GM12878 (cell line): ENCODE measurements at regions of chr1 and their contacts with region 1.

Region 1: DNA sequence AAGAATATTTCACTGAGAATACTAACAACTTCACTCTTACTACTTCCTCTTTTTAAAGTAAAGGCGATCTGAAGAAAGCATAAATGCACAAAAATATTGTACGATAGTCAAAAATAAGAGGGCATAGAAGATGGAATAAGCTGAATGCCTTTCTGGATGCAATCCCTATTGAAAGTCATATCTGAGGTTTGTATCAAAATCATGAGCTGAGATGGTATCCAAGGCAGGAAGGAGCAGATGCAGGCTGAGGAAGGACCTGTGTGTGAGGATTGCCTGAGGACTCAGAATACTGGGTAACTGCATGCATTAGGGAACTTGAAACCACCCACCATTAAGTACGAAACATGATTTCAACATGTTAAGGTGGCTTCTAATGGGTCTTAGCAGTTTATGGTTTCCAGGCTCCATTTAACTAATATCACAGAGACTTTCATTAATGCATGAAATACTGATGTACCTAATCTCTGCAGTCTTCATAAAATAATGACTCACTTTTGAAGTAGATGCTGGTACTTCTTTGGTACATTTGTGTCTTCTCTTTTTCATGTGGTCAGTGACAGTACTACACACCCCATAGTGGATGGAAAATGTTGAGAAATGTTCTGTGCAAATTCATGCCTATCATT is 29.6 kb upstream of the RGS1 start:
- DNase-seq: peak; percentile 87
- ATAC-seq: peak; percentile 67
- H3K4me3 ChIP-seq: no peak overlapping the region; the same call in 1 of the 2 replicates
- H3K27ac ChIP-seq: peak overlapping the region; percentile 84
- H3K4me1 ChIP-seq: peaks cover 53% of the 10 kb centered on the region
- H3K27me3 ChIP-seq: no peaks in the 10 kb centered on the region
- CTCF ChIP-seq: peak in 2 of 3 experiments; percentile 37 to 41; a peak in 2 of 6 replicates
- EP300 ChIP-seq: peak in 1 of 2 experiments; percentile 39; a peak in 1 of 4 replicates
- POLR2A ChIP-seq: 0 out of 2 replicates have a peak, but pooled peaks have one; percentile 34
- RAD21 ChIP-seq: peak; percentile 29; the same call in 1 of the 2 replicates

Region 2: GRCh38 chr1:192516776-192517297 is 29.2 kb before region 1 on chr1:
- CTCF ChIA-PET with region 1: interaction called, 78 read pairs
- POLR2A ChIA-PET with region 1: interaction called, 170 read pairs
- RAD21 ChIA-PET with region 1: interaction called, 288 read pairs
- SMC1A ChIA-PET with region 1: interaction called, 268 read pairs
- in situ Hi-C with region 1: no loop called
- intact Hi-C with region 1: loop called (anchors 1 kb)
- DNase-seq: peak; percentile 99
- ATAC-seq: peak; percentile 87
- H3K4me3 ChIP-seq: 0 out of 2 replicates have a peak overlapping the region, but pooled peaks have one; percentile 34
- H3K27ac ChIP-seq: peak overlapping the region; percentile 72
- H3K4me1 ChIP-seq: peaks cover 22% of the 10 kb centered on the region; the same call in 1 of the 2 replicates
- H3K27me3 ChIP-seq: no peaks in the 10 kb centered on the region
- CTCF ChIP-seq: no peak
- EP300 ChIP-seq: peak; percentile 99
- POLR2A ChIP-seq: no peak
- RAD21 ChIP-seq: peak; percentile 14; the same call in 1 of the 2 replicates

Region 3: GRCh38 chr1:192524223-192524622 is 21.8 kb before region 1 on chr1:
- CTCF ChIA-PET with region 1: interaction called, 78 read pairs
- POLR2A ChIA-PET with region 1: interaction called, 170 read pairs
- RAD21 ChIA-PET with region 1: interaction called, 288 read pairs
- SMC1A ChIA-PET with region 1: interaction called, 268 read pairs
- in situ Hi-C with region 1: no loop called
- intact Hi-C with region 1: no loop called
- DNase-seq: no peak
- ATAC-seq: no peak
- H3K4me3 ChIP-seq: no peak overlapping the region
- H3K27ac ChIP-seq: no peak overlapping the region
- H3K4me1 ChIP-seq: peaks cover 9% of the 10 kb centered on the region; the same call in 1 of the 2 replicates
- H3K27me3 ChIP-seq: no peaks in the 10 kb centered on the region
- CTCF ChIP-seq: no peak
- EP300 ChIP-seq: no peak
- POLR2A ChIP-seq: no peak
- RAD21 ChIP-seq: no peak

Region 4: DNA sequence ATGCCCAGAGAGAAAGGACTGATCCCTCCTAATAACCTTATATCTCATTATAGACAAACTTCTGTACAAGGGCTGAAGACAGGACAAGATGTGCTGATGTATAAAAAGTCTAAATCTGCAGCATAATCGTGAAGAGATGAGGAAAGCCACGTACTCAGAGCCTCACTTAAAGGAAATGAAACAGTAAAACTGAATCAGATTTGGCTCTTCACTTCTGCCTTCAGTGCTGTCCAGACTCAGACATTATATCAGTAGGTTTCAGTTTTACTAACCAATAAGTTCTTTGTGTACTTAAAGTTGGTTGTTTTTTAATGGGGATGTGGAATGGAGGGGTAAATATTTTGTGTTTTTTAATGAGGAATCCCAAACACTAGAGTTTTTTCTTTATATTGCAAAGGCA is 15.8 kb before region 1 on chr1:
- CTCF ChIA-PET with region 1: interaction called, 35 read pairs
- POLR2A ChIA-PET with region 1: interaction called, 7 read pairs
- RAD21 ChIA-PET with region 1: interaction called, 36 read pairs
- SMC1A ChIA-PET with region 1: interaction called, 77 read pairs
- in situ Hi-C with region 1: no loop called
- intact Hi-C with region 1: no loop called
- DNase-seq: peak; percentile 93
- ATAC-seq: peak; percentile 95
- H3K4me3 ChIP-seq: no peak overlapping the region
- H3K27ac ChIP-seq: peak overlapping the region; percentile 51; the same call in 1 of the 2 replicates
- H3K4me1 ChIP-seq: peaks cover 16% of the 10 kb centered on the region
- H3K27me3 ChIP-seq: no peaks in the 10 kb centered on the region; a peak in 1 of 4 replicates
- CTCF ChIP-seq: no peak
- EP300 ChIP-seq: peak; percentile 81 to 92; a peak in 3 of 4 replicates
- POLR2A ChIP-seq: no peak
- RAD21 ChIP-seq: no peak; the same call in 1 of the 2 replicates

Region 5: DNA sequence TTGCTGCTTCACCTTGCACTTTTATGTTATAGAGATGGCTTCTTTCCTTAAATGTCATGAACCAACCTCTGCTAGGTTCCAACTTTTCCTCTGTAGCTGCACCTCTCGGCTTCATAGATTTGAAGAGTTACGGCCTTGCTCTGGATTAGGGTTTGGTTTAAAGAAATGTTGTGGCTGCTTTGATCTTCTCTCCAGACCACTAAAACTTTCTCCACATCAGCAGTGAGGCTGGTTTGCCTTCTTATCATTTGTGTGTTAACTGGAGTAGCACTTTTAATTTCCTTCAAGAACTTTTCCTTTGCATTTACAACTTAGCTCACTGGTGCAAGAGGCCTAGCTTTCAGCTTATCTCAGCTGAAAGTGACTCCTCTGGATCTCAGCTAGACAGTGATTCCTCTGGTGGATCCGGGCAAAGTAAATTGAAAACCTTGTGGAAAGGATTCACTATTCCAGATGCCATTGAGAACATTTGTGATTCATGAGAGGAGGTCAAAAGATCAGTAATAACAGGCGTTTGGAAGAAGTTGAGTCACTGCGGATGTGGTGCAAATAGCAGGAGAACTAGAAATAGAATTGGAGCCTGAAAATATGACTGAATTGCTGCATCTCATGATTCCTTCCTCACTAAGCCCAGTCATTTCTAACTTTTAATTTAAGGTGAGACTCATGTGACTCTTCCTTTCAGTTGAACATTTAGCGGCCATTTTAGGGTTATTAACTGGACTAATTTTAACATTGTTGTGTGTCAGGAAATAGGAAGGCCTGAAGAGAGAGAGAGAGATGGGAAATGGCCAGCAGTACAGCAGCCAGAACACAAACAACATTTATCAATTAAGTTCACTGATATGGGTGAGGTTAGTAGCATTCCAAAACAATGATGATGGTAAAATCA is 13.4 kb after region 1 on chr1:
- CTCF ChIA-PET with region 1: interaction called, 5 read pairs
- POLR2A ChIA-PET with region 1: interaction called, 82 read pairs
- RAD21 ChIA-PET with region 1: interaction called, 91 read pairs
- SMC1A ChIA-PET with region 1: interaction called, 121 read pairs
- in situ Hi-C with region 1: no loop called
- intact Hi-C with region 1: no loop called
- DNase-seq: no peak
- ATAC-seq: peak; percentile 54
- H3K4me3 ChIP-seq: peak overlapping the region; percentile 23; the same call in 1 of the 2 replicates
- H3K27ac ChIP-seq: peak overlapping the region; percentile 79
- H3K4me1 ChIP-seq: peaks cover 3% of the 10 kb centered on the region; the same call in 1 of the 2 replicates
- H3K27me3 ChIP-seq: no peaks in the 10 kb centered on the region
- CTCF ChIP-seq: no peak
- EP300 ChIP-seq: peak; percentile 93 to 99
- POLR2A ChIP-seq: no peak
- RAD21 ChIP-seq: peak; percentile 14; the same call in 1 of the 2 replicates

Region 6: DNA sequence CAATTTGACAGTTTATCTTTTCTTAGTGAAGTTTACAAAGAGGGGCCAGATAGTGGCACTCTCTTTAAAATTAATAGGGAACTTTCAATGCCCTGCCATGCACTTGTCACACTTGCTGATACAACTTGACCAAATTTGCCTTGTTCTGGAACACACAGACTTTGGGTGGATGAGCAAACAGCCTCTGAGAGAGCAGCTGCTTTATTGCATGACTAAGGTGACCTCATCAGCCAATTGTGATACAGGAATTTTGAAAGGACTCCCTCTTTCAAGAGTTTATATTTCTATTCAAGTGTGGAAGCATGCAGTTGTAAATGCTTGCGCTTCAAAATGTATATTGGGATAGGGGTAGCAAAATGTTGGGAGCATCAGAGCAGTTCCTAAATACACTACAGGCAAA is 27.5 kb after region 1 on chr1:
- CTCF ChIA-PET with region 1: interaction called, 8 read pairs
- POLR2A ChIA-PET with region 1: interaction called, 21 read pairs
- RAD21 ChIA-PET with region 1: interaction called, 50 read pairs
- SMC1A ChIA-PET with region 1: interaction called, 125 read pairs
- in situ Hi-C with region 1: no loop called
- intact Hi-C with region 1: loop called (anchors 1 kb)
- DNase-seq: no peak
- ATAC-seq: no peak
- H3K4me3 ChIP-seq: no peak overlapping the region
- H3K27ac ChIP-seq: no peak overlapping the region
- H3K4me1 ChIP-seq: peaks cover 3% of the 10 kb centered on the region; the same call in 1 of the 2 replicates
- H3K27me3 ChIP-seq: no peaks in the 10 kb centered on the region
- CTCF ChIP-seq: no peak
- EP300 ChIP-seq: no peak
- POLR2A ChIP-seq: no peak
- RAD21 ChIP-seq: no peak

Region 7: DNA sequence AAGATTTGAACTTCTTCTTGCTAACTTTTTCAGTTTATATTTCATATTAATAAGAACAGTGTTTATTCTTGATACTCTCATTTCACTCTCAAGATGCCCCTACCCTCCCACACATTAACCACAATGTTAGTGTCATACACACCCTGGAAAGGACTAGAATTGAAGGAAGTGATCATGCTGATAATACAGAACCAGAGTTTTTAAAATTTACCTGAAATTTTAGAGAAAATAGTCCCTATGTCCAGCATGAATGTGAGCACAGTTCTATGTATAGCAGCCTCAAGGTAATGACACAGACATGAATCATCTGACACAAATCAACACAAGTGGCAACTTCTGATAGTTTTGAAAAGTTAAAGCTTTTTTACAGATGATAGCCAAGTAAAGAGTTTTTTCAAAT is 55.6 kb after region 1 on chr1:
- CTCF ChIA-PET with region 1: interaction called, 8 read pairs
- POLR2A ChIA-PET with region 1: interaction called, 5 read pairs
- RAD21 ChIA-PET with region 1: interaction called, 37 read pairs
- SMC1A ChIA-PET with region 1: interaction called, 59 read pairs
- in situ Hi-C with region 1: loop called (anchors 5 kb)
- intact Hi-C with region 1: no loop called
- DNase-seq: no peak
- ATAC-seq: peak; percentile 43
- H3K4me3 ChIP-seq: no peak overlapping the region
- H3K27ac ChIP-seq: no peak overlapping the region
- H3K4me1 ChIP-seq: peaks cover 10% of the 10 kb centered on the region; the same call in 1 of the 2 replicates
- H3K27me3 ChIP-seq: no peaks in the 10 kb centered on the region
- CTCF ChIP-seq: no peak
- EP300 ChIP-seq: no peak; a peak in 1 of 4 replicates
- POLR2A ChIP-seq: no peak
- RAD21 ChIP-seq: no peak